Posterior cingulate gyrus (tissue), 11 donors: ENCODE measurements at regions of chr17 and their contacts with region 1.

Region 1: DNA sequence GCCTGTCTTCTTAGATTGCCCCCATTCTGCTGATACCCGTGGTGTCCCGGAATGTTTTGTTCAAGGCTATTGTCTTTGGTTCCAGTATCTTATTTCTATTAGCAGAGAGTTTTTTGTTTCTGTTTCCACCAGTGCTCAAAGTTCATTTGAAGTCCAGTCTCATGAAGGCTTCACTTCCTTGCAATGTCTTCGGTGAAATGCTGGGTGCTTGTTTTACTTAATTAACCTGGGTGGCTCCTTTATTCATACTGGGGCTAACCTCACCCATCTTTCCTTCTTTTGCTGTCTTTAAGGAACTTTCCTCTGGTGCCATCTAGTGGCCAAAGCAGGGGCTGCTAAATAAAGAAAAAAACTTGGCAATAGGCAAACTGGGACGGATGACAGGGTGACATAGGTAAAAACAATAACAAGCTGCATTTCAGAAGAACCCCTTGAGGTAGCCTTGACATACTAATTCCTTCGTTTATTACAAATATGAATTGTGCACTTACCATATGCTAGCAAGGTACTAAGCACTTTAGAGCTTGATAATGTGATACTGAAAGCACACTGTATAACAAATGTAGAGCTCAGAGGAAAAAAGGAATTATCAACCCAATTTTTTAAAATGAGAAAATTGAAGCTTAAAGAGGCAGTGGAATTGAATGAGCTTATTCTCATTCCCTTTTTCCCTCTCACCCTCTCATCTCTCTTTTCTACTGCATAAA is 2.8 kb upstream of the SMIM36 start:
- DNase-seq: peak in 7 of 10 donors; percentile 21 to 72 (median 63)

Region 2: DNA sequence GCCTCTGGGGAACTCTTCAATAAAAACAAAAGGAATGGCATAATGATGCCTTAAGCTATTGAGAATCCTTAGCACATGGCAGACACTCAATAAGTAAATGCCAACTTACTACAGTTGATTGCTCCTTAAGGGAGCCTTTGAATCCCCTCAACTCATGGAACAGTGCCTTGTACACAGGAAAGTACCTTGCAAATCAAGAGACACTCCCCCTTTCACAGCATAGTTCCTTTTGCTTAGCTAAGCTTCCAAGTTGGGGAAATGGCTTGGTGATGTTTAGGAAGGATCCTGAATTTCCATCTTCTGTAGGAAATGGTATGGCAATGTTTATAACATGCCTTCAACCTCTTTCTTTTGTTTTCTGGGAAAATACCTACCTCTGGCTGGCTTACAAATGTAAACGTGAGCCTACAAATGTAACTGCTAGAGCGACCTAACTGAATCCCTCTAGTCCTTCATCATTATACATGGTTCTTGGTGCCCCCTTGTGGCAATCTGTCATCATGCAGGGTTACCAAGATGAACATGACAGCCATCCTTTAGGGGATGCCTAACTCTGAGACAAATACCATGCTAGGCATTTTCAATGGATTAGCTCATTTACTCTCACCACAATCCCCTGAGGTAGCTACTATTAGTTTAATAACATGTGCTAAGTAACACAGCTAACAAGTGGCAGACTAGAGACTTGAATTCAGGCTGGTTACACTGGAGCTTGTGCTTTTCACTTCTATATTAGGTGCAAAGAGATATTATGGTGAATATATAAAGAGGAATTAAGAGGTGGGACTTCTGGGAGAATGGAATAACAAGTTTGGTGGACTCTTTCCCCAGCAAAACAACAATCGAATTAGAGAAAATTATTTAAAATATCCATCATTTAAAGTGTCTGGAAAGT is 157.4 kb before region 1 on chr17:
- intact Hi-C with region 1: loop called (anchors 10 kb)
- DNase-seq: peak in 7 of 10 donors; percentile 19 to 82 (median 72)

Region 3: DNA sequence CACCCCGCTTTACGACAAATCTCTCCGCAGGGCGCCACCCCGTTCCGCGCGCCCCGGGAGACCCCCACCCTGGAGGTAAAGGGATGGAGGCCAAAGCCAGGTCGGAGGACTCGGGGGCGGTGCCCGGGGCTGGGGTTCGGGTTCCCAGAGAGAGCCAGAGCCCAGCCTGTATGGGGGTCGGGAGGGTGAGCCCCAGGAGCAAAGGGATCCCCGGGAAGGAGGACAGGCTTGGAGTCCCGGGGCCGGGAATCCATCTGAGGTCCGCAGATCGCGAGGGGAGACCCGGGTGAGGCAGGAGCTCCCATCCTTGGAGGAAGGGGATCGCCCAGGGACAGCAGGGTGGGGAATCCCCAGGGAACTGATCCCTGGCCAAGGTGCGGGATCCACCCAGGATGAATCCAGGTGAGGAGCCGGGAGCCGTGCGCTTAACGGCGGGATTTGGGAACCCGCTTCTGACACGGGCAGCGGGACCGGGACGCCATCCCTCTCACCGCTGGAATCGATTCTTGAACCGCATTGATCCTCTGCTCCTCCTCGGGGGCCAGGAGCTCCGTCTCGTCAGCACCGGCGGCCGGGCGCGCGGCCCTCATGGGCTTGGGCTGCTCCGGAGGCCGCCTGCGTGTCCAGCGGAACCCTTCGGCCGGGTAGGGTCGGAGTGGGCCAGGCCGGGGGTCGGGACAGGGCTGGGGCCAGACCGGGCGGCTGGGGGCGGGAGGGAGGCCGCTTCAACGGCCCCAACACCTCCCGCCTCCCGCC is 92.7 kb before region 1 on chr17 and contains the start of gene MMD:
- intact Hi-C with region 1: loop called (anchors 5 kb)
- DNase-seq: peak in 7 of 10 donors; percentile 15 to 86 (median 29)